ENCODE measurements at regions of chr2 and their contacts with region 1.

Region 1: GRCh38 chr2:43194121-43194869 is 32.1 kb downstream of the ZFP36L2 start:
- DNase-seq: no peak
- H3K4me3 Mint-ChIP-seq: peak overlapping the region; percentile 77
- H3K27ac Mint-ChIP-seq: peak overlapping the region; percentile 97
- H3K4me1 Mint-ChIP-seq: peaks cover 57% of the 10 kb centered on the region
- H3K27me3 Mint-ChIP-seq: no peaks in the 10 kb centered on the region

Region 2: GRCh38 chr2:43169987-43170386 is 24.3 kb before region 1 on chr2:
- CTCF ChIA-PET with region 1: interaction called, 11 read pairs
- POLR2A ChIA-PET with region 1: interaction called, 33 read pairs
- intact Hi-C with region 1: loop called (anchors 1 kb)
- DNase-seq: peak; percentile 88
- H3K4me3 Mint-ChIP-seq: peak overlapping the region; percentile 43
- H3K27ac Mint-ChIP-seq: peak overlapping the region; percentile 85
- H3K4me1 Mint-ChIP-seq: peaks cover 81% of the 10 kb centered on the region
- H3K27me3 Mint-ChIP-seq: no peaks in the 10 kb centered on the region

Region 3: GRCh38 chr2:43178602-43179542 is 15.4 kb before region 1 on chr2:
- CTCF ChIA-PET with region 1: interaction called, 11 read pairs
- POLR2A ChIA-PET with region 1: interaction called, 33 read pairs
- intact Hi-C with region 1: loop called (anchors 1 kb)
- DNase-seq: peak; percentile 61
- H3K4me3 Mint-ChIP-seq: peak overlapping the region; percentile 29
- H3K27ac Mint-ChIP-seq: peak overlapping the region; percentile 87
- H3K4me1 Mint-ChIP-seq: peaks cover 69% of the 10 kb centered on the region
- H3K27me3 Mint-ChIP-seq: no peaks in the 10 kb centered on the region

Region 4: DNA sequence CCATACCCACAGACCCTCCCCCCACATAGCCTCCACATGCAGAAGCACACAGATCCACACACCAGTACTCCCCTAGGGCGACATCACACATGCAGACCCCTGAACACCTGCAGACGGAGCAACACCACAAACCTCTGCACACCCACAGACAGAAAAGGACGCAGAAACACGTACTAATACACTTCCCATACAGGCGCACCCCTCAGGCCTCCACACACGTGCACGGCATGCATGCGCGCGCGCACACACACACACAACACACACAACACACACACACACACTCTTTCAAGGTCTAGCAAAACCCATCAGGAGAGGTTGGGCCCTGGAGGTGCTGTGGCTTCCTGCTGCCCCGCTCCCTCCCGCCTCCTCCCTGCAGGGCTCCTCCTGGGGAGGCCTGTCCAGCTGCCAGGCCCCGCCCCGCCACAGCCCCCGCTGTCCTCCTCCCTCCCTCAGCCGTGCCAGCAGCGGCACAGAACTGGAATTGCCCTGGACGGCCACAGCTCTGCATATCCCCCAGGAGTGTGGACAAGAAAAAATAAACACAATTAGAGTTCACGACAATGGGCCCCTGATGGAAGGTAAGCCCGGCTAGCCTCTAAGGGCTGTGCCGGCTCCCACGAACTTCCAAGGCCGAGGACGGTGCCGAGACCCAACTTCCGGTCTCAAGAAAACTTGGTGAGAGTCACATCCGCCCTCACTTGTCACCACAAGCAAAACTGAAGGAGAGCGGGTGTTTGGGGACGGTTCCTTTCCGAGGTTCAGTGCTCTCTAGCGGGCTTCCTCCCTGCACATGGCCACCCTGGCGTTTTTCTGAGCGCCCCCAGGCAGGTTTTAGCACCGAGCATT is 25.3 kb after region 1 on chr2:
- CTCF ChIA-PET with region 1: interaction called, 9 read pairs
- POLR2A ChIA-PET with region 1: interaction called, 20 read pairs
- intact Hi-C with region 1: loop called (anchors 1 kb)
- DNase-seq: peak; percentile 89
- H3K4me3 Mint-ChIP-seq: peak overlapping the region; percentile 88
- H3K27ac Mint-ChIP-seq: peak overlapping the region; percentile 95
- H3K4me1 Mint-ChIP-seq: peaks cover 42% of the 10 kb centered on the region
- H3K27me3 Mint-ChIP-seq: no peaks in the 10 kb centered on the region